ENCODE measurements at regions of chr12 and their contacts with region 1.

Region 1: GRCh38 chr12:107079172-107080011 is 14.0 kb downstream of the CRY1 start:
- DNase-seq: no peak
- ATAC-seq: peak; percentile 86
- H3K4me3 Mint-ChIP-seq: no peak overlapping the region
- H3K27ac Mint-ChIP-seq: no peak overlapping the region
- H3K4me1 Mint-ChIP-seq: peaks cover 15% of the 10 kb centered on the region
- H3K27me3 Mint-ChIP-seq: no peaks in the 10 kb centered on the region
- CTCF ChIP-seq: peak; percentile 62

Region 2: DNA sequence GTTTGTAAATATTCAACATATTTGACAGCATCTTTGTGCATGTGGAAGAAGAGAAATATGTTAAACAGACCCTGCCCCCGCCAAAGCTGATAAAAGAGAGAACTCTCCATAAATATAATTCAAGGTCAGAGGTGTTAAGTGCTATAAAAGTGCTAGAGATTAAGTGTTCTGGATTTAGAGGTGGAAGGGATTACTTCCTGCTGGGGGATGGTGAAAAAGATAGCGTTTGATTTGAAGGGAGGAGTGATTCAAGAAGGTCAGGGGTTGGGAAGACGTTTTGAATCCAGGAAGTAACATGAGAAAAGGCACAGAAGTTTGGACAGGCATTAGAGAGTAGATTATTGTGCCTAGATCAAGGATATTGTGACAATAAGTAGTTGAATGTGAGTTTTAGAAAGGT is 274.7 kb before region 1 on chr12:
- CTCF ChIA-PET with region 1: no interaction called
- POLR2A ChIA-PET with region 1: no interaction called
- intact Hi-C with region 1: no loop called
- DNase-seq: no peak
- ATAC-seq: no peak
- H3K4me3 Mint-ChIP-seq: no peak overlapping the region
- H3K27ac Mint-ChIP-seq: no peak overlapping the region
- H3K4me1 Mint-ChIP-seq: peaks cover 4% of the 10 kb centered on the region
- H3K27me3 Mint-ChIP-seq: no peaks in the 10 kb centered on the region
- CTCF ChIP-seq: no peak

Region 3: GRCh38 chr12:107066691-107067090 is 12.7 kb before region 1 on chr12:
- CTCF ChIA-PET with region 1: interaction called, 10 read pairs
- POLR2A ChIA-PET with region 1: no interaction called
- intact Hi-C with region 1: no loop called
- DNase-seq: no peak
- ATAC-seq: no peak
- H3K4me3 Mint-ChIP-seq: no peak overlapping the region
- H3K27ac Mint-ChIP-seq: no peak overlapping the region
- H3K4me1 Mint-ChIP-seq: peaks cover 4% of the 10 kb centered on the region
- H3K27me3 Mint-ChIP-seq: no peaks in the 10 kb centered on the region
- CTCF ChIP-seq: no peak

Region 4: GRCh38 chr12:107109741-107110719 is 30.6 kb after region 1 on chr12:
- CTCF ChIA-PET with region 1: interaction called, 19 read pairs
- POLR2A ChIA-PET with region 1: no interaction called
- intact Hi-C with region 1: no loop called
- DNase-seq: no peak
- ATAC-seq: no peak
- H3K4me3 Mint-ChIP-seq: no peak overlapping the region
- H3K27ac Mint-ChIP-seq: no peak overlapping the region
- H3K4me1 Mint-ChIP-seq: no peaks in the 10 kb centered on the region
- H3K27me3 Mint-ChIP-seq: peaks cover 5% of the 10 kb centered on the region
- CTCF ChIP-seq: no peak